ENCODE measurements at regions of chr9 and their contacts with region 1.

Region 1: GRCh38 chr9:114681594-114682332 is at the start of gene TEX48:
- DNase-seq: peak; percentile 81 to 87 (median 83)
- H3K4me3 ChIP-seq: no peak within 1 kb of the TSS
- H3K27ac ChIP-seq: no peak within 1 kb of the TSS
- H3K4me1 ChIP-seq: peaks cover 6 to 15% (median 10%) of the 10 kb centered on the region in 4 experiments
- H3K27me3 ChIP-seq: no peaks in the 10 kb centered on the region

Region 2: DNA sequence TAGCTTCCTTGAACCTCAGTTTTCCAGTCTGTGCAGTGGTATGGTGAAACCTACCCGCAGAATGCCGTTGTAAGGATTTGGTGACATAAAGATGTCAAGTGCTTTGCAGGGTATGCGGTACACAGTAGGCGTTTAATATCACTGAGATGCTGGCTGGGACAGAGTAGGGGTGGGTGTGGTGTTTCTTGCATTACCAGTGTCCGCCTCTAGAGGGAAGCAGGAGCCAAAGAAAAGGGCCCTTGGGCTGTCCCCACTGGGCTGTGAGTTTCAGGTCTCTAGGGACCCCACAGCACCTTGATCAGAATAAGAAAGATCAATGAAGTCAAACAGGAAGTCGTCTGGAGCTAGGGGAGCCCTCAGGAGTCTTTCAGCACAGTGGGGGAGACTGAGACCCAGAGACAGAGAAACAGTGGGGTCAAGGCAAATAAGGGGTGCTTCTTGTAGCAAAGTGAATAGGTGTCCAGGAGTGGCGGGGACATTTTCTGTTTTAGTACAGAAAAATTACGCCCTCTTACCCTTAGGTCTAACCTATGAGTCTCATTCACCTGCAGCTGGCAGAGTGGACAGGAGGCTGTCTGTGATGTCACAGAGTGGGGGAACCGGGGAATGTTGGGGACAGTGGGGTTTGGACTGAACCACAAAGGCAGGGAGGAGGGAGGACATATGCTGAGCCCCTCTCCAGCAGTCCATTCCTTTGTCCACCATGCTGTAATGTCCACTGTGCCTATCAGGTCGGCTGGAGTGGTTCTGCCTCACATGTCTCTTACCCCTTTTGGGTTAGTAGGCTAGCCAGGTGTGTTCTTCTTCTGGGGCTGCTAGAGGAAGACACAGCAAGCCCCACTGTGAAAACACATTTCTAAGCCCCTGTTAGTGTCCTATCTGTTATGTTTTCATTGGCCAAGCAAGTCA is 19.4 kb before region 1 on chr9:
- CTCF ChIA-PET with region 1: interaction called, 10 read pairs
- POLR2A ChIA-PET with region 1: interaction called, 6 read pairs
- DNase-seq: peak; percentile 42 to 63 (median 56)
- H3K4me3 ChIP-seq: no peak overlapping the region
- H3K27ac ChIP-seq: no peak overlapping the region
- H3K4me1 ChIP-seq: peaks cover 0 to 8% (median 5%) of the 10 kb centered on the region in 4 experiments
- H3K27me3 ChIP-seq: no peaks in the 10 kb centered on the region

Region 3: DNA sequence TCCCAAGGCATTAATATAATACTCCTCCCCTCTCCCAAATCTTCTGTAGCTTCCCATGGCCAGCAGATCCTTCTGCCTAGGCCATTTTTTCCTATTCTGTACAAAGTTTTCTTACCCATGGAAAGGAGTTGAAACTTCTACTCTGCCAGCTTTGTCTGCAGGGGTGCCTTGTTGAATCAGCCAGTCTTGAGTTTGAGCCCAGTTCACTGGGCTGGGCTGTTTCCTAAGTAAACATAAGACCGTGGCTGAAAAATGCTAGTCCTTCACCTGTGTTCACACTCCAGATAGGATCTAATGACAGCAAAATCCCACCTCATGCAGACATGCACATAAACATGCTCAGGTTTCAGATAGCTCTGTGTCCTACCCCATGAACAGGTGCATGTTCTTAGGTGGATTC is 10.2 kb before region 1 on chr9:
- CTCF ChIA-PET with region 1: interaction called, 14 read pairs
- POLR2A ChIA-PET with region 1: no interaction called
- DNase-seq: no peak
- H3K4me3 ChIP-seq: no peak overlapping the region
- H3K27ac ChIP-seq: no peak overlapping the region
- H3K4me1 ChIP-seq: peaks cover 0 to 5% (median 3%) of the 10 kb centered on the region in 4 experiments
- H3K27me3 ChIP-seq: no peaks in the 10 kb centered on the region

Region 4: DNA sequence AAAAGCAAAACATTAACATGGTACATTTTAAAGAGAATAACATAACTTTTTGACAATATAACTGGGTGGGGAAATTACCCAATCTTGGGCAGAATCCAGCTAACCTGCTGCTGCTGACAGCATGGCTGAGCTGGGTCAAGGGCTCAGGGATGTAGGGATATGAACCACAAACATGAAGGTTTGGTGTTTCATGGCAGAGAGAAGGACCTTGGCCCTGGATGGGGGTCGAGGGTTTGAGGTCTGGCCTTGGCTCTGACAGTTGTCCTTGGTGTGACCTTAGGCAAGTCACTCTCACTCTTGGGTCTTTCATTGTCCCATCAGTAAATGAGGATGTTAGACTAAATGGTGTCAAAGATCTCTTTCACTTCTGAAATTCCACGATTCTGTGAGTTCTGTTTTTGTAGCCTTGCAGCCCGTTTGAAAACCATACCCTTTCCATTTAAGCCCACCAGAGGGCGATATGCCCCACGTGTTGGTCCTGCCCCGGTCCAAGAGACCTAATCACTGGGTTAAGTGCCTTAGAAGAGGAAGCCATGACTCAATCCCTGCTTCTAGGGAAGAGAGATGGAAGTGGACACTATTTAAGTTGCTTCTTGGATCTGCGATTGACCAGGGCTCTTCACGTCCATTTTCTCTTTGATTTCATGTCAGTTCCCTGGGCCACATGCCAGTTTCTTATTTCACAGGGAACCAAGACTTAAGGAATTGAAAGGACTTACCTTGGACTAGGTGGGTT is 57.0 kb after region 1 on chr9:
- CTCF ChIA-PET with region 1: interaction called, 13 read pairs
- POLR2A ChIA-PET with region 1: no interaction called
- DNase-seq: peak; percentile 83 to 93 (median 88)
- H3K4me3 ChIP-seq: no peak overlapping the region
- H3K27ac ChIP-seq: no peak overlapping the region
- H3K4me1 ChIP-seq: peaks cover 0 to 8% (median 2%) of the 10 kb centered on the region in 4 experiments
- H3K27me3 ChIP-seq: peaks cover 0 to 2% (median 0%) of the 10 kb centered on the region in 5 experiments

Region 5: DNA sequence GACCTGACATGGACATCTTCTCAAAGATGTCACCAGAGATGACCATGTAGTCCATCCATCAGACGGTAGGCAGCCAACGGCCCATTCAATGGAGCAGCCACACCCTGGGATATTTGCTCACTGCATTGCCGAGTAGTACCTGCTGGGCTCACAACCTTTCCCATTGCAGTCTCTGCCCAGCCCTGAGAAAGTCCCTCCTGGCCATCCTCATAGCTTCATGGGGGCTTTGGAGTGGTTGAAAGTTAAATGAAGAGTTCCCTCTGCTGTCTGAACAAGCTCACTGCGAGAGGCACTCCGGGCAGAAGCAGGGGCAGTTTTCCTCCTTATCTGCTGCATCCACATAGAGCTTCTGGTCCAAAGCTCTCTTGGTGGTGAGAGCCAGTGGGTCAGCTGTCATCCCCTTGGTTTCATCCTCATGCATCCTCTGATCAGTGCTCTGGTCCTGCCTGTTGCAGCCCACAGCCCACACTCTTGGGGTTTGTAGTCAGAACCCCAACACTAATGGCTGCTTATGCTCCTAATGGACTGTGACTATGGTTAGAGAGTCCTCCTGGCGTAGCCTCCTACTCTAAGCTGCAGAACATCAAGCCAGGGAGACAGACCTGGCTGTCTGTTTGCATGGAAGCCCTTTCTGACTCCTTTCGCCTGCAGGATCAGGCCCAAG is 225.3 kb after region 1 on chr9:
- CTCF ChIA-PET with region 1: interaction called, 28 read pairs
- POLR2A ChIA-PET with region 1: no interaction called
- DNase-seq: peak; percentile 46 to 63 (median 55)
- H3K4me3 ChIP-seq: no peak overlapping the region
- H3K27ac ChIP-seq: no peak overlapping the region
- H3K4me1 ChIP-seq: peaks cover 0 to 10% (median 5%) of the 10 kb centered on the region in 4 experiments
- H3K27me3 ChIP-seq: no peaks in the 10 kb centered on the region

Region 6: DNA sequence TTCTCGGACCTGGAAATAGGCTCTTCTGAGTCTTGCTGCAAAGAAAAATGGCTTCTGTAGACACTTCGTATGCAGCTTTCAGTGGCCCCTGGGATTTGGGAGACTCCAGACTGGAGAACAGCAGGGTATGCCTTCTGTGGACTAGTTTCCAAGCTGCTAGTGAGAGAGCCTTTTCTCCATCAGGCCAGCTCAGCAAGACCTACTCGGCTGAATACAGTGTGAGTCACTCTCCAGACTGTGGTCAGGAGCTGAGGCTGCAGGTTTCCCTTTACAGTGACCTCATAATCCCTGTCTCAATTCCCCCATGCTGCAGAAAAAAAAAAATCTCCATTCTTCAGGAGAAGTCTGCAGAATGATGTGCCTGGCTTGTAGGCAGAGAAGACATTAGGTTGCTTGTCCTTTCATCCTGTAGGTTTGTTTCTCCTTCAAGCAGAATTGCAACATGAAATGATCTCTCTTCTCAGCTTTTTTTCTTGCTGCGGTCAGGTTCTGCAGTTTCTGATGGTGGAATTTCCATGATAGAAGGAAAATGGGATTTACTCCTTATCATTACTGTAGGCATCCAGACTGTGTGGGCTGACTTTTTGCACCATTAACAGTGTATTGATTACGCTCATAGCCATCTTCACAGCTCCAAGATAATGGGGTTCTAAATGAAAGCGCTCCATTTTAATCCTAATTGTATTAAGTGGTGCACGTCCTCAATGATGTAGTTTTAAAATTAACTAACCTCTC is 326.9 kb after region 1 on chr9:
- CTCF ChIA-PET with region 1: interaction called, 26 read pairs
- POLR2A ChIA-PET with region 1: no interaction called
- DNase-seq: peak; percentile 20 to 53 (median 52)
- H3K4me3 ChIP-seq: no peak overlapping the region
- H3K27ac ChIP-seq: no peak overlapping the region
- H3K4me1 ChIP-seq: peaks cover 0 to 5% (median 1%) of the 10 kb centered on the region in 4 experiments
- H3K27me3 ChIP-seq: no peaks in the 10 kb centered on the region

Region 7: DNA sequence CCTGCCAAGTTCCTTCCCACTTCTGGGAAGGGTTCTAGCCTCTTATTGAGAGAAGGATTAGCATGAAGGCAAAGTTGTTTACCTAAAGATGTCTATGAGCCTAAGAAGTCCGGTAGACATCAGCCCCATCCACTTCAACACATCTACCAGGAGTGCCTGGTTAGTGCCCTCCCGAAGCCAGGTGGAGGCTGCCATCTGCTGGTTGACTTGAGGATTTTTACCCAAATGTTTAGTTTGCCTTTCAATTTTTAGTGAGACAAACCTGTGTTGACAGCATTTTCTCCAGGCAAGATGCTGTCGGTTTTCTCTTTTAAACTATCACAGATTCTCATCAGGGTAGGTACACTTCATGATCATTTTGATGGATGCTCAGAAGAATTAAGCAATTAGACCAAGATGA is 332.2 kb after region 1 on chr9:
- CTCF ChIA-PET with region 1: interaction called, 26 read pairs
- POLR2A ChIA-PET with region 1: no interaction called
- DNase-seq: peak; percentile 72 to 90 (median 83)
- H3K4me3 ChIP-seq: no peak overlapping the region
- H3K27ac ChIP-seq: no peak overlapping the region
- H3K4me1 ChIP-seq: peaks cover 0 to 2% (median 0%) of the 10 kb centered on the region in 4 experiments
- H3K27me3 ChIP-seq: no peaks in the 10 kb centered on the region

Measured in common myeloid progenitor, CD34-positive (primary cell).